Panc1 (cell line): ENCODE measurements at regions of chr1 and their contacts with region 1.

Region 1: DNA sequence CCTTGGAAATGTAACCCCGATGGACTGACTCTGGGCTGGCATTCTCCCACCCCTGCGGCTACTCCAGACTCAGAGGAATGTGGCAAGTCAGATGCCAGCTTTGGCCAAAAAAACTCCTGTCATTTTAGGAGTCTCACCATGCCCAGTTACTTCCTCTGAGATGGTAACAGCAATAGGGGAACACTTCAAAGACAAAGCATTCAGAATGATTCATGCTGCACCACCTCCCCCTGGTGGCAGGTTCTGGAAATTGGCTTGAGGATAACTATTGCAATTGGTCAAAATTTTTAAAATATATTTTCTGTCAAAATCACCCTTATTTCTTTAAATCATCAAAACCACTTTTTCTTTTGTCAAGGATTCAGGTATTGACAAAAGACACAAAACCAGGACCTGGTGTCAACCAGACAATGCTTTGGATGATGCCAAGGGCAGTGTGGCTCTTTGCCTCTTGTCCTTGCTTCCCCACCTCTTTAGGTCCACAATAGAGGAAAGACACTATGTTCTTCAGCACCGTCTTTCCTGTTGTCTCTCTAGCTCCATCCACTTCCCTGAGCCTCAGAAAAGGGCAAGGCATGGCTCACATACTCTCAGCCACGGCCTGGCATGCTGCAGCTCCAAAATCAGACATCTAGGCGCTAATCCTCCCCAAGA is 9.9 kb upstream of the CDCA8 start:
- DNase-seq: peak; percentile 42
- ATAC-seq: peak; percentile 81
- H3K4me3 ChIP-seq: no peak overlapping the region
- H3K27ac ChIP-seq: no peak overlapping the region
- H3K4me1 ChIP-seq: no peaks in the 10 kb centered on the region
- H3K27me3 ChIP-seq: no peaks in the 10 kb centered on the region
- CTCF ChIP-seq: peak; percentile 90

Region 2: DNA sequence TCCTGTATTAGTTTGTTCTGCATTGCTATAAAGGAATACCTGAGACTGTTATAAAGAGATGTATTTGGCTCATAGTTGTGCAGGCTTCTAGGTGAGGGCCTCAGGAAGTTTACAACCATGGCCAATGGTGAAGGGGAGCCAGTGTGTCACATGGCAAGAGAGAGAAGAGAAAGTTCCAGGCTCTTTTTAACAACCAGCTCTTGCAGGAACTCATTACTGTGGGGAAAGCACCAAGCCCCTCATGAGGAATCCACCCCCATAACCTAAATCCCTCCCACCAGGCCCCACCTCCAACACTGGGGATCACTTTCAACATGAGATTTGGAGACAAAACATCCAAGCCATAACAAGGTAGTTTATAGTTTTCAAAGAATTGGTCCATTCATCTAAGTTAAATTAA is 162.8 kb before region 1 on chr1:
- CTCF ChIA-PET with region 1: no interaction called
- POLR2A ChIA-PET with region 1: no interaction called
- in situ Hi-C with region 1: no loop called
- intact Hi-C with region 1: no loop called
- DNase-seq: no peak
- ATAC-seq: no peak
- H3K4me3 ChIP-seq: no peak overlapping the region
- H3K27ac ChIP-seq: no peak overlapping the region
- H3K4me1 ChIP-seq: peaks cover 6% of the 10 kb centered on the region
- H3K27me3 ChIP-seq: no peaks in the 10 kb centered on the region
- CTCF ChIP-seq: no peak

Region 3: DNA sequence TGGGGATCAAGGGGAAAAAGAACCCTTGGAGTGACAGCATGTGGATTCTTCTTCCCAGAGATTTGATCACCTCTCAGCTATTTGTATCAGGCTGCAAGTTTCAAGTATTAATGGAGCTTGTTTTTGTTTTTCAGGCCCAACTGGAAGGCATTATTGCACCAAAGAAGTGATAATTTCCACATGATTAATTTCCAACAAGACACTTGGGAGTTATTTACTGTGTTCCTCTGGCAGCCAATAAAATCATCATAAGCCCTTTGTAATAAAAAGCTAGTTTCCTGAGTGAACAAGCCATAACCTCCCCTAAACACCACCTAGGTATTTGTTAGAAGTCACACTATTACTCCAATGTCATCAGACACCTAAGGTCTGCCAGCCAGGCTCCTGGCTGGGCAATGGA is 117.6 kb before region 1 on chr1:
- CTCF ChIA-PET with region 1: interaction called, 3 read pairs
- POLR2A ChIA-PET with region 1: no interaction called
- in situ Hi-C with region 1: no loop called
- intact Hi-C with region 1: loop called (anchors 1 kb)
- DNase-seq: no peak
- ATAC-seq: no peak
- H3K4me3 ChIP-seq: no peak overlapping the region
- H3K27ac ChIP-seq: no peak overlapping the region
- H3K4me1 ChIP-seq: no peaks in the 10 kb centered on the region
- H3K27me3 ChIP-seq: no peaks in the 10 kb centered on the region
- CTCF ChIP-seq: no peak

Region 4: GRCh38 chr1:37602750-37603694 is 79.4 kb before region 1 on chr1:
- CTCF ChIA-PET with region 1: interaction called, 10 read pairs
- POLR2A ChIA-PET with region 1: interaction called, 3 read pairs
- in situ Hi-C with region 1: no loop called
- intact Hi-C with region 1: loop called (anchors 1 kb)
- DNase-seq: peak; percentile 10
- ATAC-seq: peak; percentile 83
- H3K4me3 ChIP-seq: no peak overlapping the region
- H3K27ac ChIP-seq: no peak overlapping the region
- H3K4me1 ChIP-seq: no peaks in the 10 kb centered on the region
- H3K27me3 ChIP-seq: peaks cover 4% of the 10 kb centered on the region; the same call in 1 of the 2 replicates
- CTCF ChIP-seq: peak; percentile 91

Region 5: DNA sequence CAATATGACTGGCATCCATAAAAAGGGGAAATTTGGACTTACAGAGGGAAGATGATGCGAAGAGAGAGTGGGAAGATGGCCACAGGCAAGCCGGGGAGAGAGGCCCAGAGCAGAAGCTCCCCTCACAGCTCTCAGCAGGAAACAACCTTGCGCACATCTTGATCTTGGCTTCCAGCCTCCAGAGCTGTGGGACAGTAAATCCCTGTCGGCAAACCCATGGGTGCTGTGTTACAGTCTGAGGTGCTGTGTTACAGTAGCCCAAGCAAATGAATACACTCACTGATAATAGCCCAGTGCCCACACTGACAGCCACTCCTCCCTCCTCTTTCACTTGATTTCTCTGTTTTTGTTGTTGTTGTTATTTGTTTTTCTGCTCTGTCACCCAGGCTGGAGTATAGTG is 32.2 kb after region 1 on chr1:
- CTCF ChIA-PET with region 1: no interaction called
- POLR2A ChIA-PET with region 1: no interaction called
- in situ Hi-C with region 1: no loop called
- intact Hi-C with region 1: no loop called
- DNase-seq: no peak
- ATAC-seq: 0 out of 2 replicates have a peak, but pooled peaks have one; percentile 37
- H3K4me3 ChIP-seq: no peak overlapping the region
- H3K27ac ChIP-seq: no peak overlapping the region
- H3K4me1 ChIP-seq: no peaks in the 10 kb centered on the region
- H3K27me3 ChIP-seq: no peaks in the 10 kb centered on the region
- CTCF ChIP-seq: no peak

Region 6: GRCh38 chr1:37776946-37777516 is 94.6 kb after region 1 on chr1:
- CTCF ChIA-PET with region 1: no interaction called
- POLR2A ChIA-PET with region 1: interaction called, 23 read pairs
- in situ Hi-C with region 1: no loop called
- intact Hi-C with region 1: no loop called
- DNase-seq: no peak
- ATAC-seq: peak; percentile 63; the same call in 1 of the 2 replicates
- H3K4me3 ChIP-seq: no peak overlapping the region
- H3K27ac ChIP-seq: no peak overlapping the region
- H3K4me1 ChIP-seq: no peaks in the 10 kb centered on the region
- H3K27me3 ChIP-seq: no peaks in the 10 kb centered on the region
- CTCF ChIP-seq: no peak